BJ (cell line): ENCODE measurements at regions of chr7 and their contacts with region 1.

Region 1: DNA sequence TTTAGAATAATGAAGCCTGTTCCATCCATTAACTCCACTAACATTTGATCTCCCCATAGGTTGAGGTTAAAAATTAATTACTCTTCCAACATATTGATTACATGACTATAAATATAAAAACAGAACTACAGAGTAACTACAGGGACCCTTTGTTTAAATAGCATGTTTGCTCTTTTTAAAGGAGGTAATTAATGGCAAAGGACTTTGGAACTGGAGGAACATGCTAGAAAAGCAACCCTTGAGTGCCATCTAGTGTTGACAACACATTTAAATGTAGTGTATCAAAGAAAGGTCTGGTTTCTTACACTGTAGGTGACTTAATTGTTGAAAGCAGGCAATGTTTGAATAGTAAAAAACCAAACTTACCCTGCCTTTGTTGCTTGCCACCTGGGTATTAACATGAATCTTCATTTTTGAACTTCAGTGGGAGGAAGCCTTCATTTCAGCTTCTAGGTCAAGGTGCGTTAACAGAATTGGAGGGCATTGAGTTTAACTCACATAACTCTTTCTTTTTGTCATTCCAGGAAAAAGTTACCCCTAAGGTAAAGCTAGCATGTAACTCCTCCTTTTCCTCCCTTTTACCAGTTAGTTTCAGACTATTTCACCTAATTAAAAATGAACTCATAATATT is 52.6 kb upstream of the CAPZA2 start:
- DNase-seq: no peak
- H3K4me3 ChIP-seq: no peak overlapping the region
- H3K27me3 ChIP-seq: no peaks in the 10 kb centered on the region
- CTCF ChIP-seq: peak; percentile 53

Region 2: DNA sequence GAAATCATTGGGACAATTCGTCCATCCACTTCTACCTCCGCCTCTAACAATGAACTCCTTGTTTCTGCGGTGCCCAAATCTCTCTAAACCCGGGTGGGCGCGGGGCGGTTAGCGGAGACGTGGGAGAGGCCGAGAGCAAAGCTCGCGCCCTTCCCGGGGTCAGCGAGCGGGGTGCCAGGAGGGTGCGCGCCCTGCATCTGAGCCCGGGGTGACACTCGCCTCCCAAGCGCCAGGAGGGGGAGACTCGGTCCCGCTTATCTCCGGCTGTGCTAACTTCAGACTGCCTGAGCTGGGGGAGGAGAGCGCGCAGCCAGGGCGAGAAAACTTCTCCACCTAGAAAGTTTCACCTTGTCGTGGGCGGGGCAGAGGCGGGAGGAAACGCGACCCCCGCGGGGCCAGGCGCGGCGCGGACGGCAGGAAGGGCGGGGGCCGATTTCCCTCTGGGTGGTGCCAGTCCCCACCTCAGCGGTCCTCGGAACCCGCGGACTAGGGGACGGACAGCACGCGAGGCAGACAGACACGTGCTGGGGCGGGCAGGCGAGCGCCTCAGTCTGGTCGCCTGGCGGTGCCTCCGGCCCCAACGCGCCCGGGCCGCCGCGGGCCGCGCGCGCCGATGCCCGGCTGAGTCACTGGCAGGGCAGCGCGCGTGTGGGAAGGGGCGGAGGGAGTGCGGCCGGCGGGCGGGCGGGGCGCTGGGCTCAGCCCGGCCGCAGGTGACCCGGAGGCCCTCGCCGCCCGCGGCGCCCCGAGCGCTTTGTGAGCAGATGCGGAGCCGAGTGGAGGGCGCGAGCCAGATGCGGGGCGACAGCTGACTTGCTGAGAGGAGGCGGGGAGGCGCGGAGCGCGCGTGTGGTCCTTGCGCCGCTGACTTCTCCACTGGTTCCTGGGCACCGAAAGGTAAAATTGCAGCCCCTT is 137.8 kb before region 1 on chr7 and contains the start of gene MET:
- CTCF ChIA-PET with region 1: interaction called, 12 read pairs
- POLR2A ChIA-PET with region 1: no interaction called
- DNase-seq: no peak
- H3K4me3 ChIP-seq: peak within 1 kb of the TSS; percentile 70
- H3K27me3 ChIP-seq: no peaks in the 10 kb centered on the region
- CTCF ChIP-seq: peak; percentile 83
- polyA plus RNA-seq, gene MET: 68.3 and 82.8 TPM in 2 replicates

Region 3: GRCh38 chr7:116828281-116828680 is 18.5 kb after region 1 on chr7:
- CTCF ChIA-PET with region 1: no interaction called
- POLR2A ChIA-PET with region 1: no interaction called
- DNase-seq: no peak
- H3K4me3 ChIP-seq: no peak overlapping the region
- H3K27me3 ChIP-seq: no peaks in the 10 kb centered on the region; the same call in 1 of the 2 replicates
- CTCF ChIP-seq: no peak